GM10248 (cell line): ENCODE measurements at regions of chr14 and their contacts with region 1.

Region 1: DNA sequence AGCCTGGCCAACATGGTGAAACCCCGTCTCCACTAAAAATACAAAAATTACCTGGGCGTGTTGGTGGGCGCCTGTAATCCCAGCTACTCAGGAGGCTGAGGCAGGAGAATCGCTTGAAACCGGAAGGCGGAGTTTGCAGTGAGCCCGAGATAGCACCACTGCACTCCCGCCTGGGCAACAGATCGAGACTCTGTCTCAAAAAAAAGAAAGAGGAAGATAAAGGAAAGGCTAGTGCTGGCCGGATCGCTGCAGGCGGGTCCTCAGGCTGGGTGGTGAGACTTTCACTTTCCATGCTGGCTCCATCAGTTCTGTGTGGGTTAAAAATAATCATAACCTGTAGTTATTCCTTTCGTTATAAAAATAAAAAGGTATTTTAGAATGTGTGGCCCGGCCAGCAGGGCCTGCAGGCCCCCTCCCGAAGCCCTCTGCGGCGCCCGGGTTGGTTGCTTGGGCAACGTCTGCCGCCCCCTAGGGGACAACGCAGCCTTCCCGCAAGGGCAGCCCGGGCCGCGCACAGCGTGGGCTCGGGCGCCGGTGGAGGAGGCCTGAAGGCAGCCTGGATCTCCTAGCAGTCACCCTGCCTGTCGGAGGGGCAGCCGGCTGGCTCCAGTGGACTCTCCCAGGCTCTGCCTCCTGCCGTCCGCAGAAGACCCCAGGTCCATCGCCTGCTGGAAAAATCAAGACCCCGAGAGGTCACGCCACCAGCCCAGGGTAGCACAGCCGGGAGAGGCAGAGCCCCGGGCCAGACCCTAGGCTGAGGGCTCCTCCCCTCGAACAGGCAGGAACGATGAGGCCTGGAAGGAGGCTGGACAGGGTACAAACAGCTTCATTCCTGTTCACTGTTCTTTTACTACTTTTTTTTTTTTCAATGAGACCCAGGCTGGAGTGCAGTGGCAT is 5.0 kb upstream of the SLC25A47 start:
- DNase-seq: peak; percentile 83
- CTCF ChIP-seq: peak; percentile 79

Region 2: DNA sequence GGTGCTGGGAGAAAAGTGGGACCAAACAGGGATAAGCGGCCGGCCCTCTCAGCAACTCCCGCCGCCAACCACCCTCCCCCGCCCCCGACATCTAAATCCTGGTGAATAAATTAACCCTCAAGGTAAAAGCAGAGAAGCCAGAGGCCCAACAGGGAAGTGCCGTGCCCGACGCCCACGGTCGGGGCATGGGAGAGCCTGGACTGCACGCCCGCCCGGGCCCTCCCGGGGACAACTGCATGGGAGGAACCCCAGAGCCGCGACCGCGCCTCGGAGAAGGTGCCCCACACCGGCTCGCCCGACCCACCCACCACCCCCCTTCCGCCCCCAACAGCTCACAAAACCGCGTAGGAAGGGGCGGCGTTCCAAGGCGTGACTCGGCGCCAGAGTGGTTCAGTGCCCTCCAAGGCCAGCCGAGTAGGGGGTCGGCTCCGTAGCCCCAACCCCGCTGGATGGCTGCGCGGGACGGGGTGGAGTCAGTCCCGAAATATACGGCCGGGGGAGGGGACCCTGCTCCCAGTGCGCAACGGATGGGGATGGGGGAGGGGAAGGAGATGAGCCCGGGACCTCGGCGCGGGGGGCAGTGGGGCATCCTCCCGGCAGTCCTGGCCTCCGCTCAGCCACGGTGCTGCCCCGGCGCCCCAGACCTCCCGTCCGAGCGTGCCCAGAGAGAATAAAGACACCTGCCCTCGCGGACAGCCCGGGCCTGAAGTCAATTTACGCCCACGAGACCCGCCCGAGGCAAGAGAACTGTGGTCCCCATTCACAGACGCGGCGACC is 12.6 kb before region 1 on chr14:
- CTCF ChIA-PET with region 1: interaction called, 16 read pairs
- POLR2A ChIA-PET with region 1: no interaction called
- DNase-seq: no peak
- CTCF ChIP-seq: no peak

Region 3: GRCh38 chr14:100736234-100737180 is 418.3 kb after region 1 on chr14:
- CTCF ChIA-PET with region 1: no interaction called
- POLR2A ChIA-PET with region 1: no interaction called
- DNase-seq: no peak
- CTCF ChIP-seq: no peak